T-cell (primary cell): ENCODE measurements at regions of chr13 and their contacts with region 1.

Region 1: GRCh38 chr13:29771247-29771646 is 79.2 kb downstream of the UBL3 start:
- DNase-seq: peak in 2 of 35 experiments; percentile 10 to 70
- ATAC-seq: peak; percentile 41 to 75 (median 46)
- H3K4me3 ChIP-seq: no peak overlapping the region
- H3K4me3 Mint-ChIP-seq: no peak overlapping the region
- H3K27ac ChIP-seq: no peak overlapping the region
- H3K27ac Mint-ChIP-seq: no peak overlapping the region
- H3K4me1 ChIP-seq: no peaks in the 10 kb centered on the region
- H3K4me1 Mint-ChIP-seq: peaks cover 5 to 7% (median 6%) of the 10 kb centered on the region in 3 donors
- H3K27me3 ChIP-seq: no peaks in the 10 kb centered on the region
- H3K27me3 Mint-ChIP-seq: no peaks in the 10 kb centered on the region

Region 2: DNA sequence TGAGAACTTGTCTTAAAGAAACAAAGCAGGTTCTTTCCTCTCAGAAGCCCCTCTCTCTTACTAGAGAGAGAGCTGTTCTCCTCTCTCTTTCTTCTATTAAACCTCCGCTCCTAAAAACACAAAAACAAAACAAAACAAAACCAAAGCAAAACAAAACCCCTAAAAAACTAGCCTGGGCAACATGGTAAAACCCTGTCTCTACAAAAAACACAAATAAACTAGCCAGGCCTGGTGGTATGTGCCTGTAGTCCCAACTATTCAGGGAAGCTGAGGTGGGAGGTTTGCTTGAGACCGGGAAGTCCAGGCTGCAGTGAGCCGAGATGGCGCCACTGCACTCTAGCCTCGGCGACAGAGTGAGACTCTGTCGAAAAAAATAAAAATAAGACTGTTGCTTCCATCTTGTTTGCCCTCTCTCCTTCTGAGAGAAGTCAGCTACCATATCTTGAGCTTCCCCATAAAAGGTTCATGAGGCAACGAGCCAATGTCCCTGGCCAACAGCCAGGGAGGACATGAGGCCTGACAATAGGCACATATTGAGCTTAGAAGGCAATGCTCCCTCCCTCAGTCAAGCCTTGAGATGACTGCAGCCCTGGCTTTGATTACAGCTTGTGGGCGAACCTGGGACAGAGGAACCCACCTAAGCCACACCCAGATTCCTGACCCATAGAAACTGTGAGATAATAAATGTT is 1653.4 kb before region 1 on chr13:
- CTCF ChIA-PET with region 1: no interaction called
- POLR2A ChIA-PET with region 1: no interaction called
- DNase-seq: no peak
- ATAC-seq: no peak
- H3K4me3 ChIP-seq: no peak overlapping the region
- H3K4me3 Mint-ChIP-seq: no peak overlapping the region
- H3K27ac ChIP-seq: no peak overlapping the region
- H3K27ac Mint-ChIP-seq: no peak overlapping the region
- H3K4me1 ChIP-seq: no peaks in the 10 kb centered on the region
- H3K4me1 Mint-ChIP-seq: peaks cover 0 to 7% (median 5%) of the 10 kb centered on the region in 3 donors
- H3K27me3 ChIP-seq: peaks cover 0 to 9% of the 10 kb centered on the region in 2 experiments
- H3K27me3 Mint-ChIP-seq: peaks cover 4 to 11% of the 10 kb centered on the region in 2 donors

Region 3: GRCh38 chr13:29758531-29759114 is 12.6 kb before region 1 on chr13:
- CTCF ChIA-PET with region 1: interaction called, 3 to 15 read pairs
- POLR2A ChIA-PET with region 1: interaction called in 1 of 2 experiments, 3 read pairs
- DNase-seq: peak in 34 of 35 experiments; percentile 1 to 65 (median 35)
- ATAC-seq: peak; percentile 49 to 81 (median 60)
- H3K4me3 ChIP-seq: no peak overlapping the region
- H3K4me3 Mint-ChIP-seq: peak overlapping the region in 1 of 3 donors; percentile 24
- H3K27ac ChIP-seq: no peak overlapping the region
- H3K27ac Mint-ChIP-seq: peak overlapping the region in 1 of 2 donors; percentile 56
- H3K4me1 ChIP-seq: peaks cover 5 to 9% of the 10 kb centered on the region in 2 experiments
- H3K4me1 Mint-ChIP-seq: peaks cover 22 to 27% (median 22%) of the 10 kb centered on the region in 3 donors
- H3K27me3 ChIP-seq: no peaks in the 10 kb centered on the region
- H3K27me3 Mint-ChIP-seq: no peaks in the 10 kb centered on the region

Region 4: DNA sequence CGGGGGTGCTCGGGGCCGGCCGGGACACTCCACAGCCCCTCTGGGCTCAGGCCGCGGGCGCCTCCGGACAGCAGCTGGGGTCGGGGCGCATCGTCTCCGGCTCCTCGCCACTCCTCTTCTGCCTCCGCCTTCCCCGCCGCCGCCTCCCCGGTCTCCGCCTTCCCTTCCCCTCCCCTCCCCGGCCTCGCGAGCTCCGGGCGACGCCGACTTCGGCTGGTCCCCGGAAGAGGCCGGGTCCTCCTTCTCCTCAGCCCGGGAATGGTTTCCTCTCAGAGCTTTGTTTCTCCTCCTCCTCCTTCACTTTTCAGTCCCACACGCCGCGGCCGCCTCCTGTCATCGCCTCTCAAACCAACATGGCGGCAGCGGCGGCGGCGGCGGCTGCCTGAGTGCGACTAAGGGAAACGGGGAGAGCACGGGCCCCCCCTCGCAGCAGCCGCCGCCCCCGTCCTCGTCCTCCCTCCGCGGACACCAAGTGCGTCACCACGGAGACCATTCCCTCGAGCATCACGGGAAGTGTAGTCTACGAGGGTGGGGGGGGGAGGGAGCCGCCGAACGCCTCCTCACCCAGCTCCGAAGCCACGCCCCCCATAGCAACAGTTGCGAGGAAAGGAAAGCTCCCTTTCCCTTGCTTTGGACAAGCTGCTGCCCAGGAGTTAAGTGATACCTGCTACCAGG is 79.1 kb after region 1 on chr13 and contains the start of gene UBL3:
- CTCF ChIA-PET with region 1: interaction called, 5 to 22 read pairs
- POLR2A ChIA-PET with region 1: interaction called, 4 read pairs
- DNase-seq: peak; percentile 86 to 97 (median 94)
- ATAC-seq: peak; percentile 92 to 94 (median 92)
- H3K4me3 ChIP-seq: peak within 1 kb of the TSS; percentile 96 to 99
- H3K4me3 Mint-ChIP-seq: peak within 1 kb of the TSS; percentile 93 to 98 (median 97)
- H3K27ac ChIP-seq: peak within 1 kb of the TSS; percentile 94
- H3K27ac Mint-ChIP-seq: peak within 1 kb of the TSS; percentile 98 to 99
- H3K4me1 ChIP-seq: peaks cover 0 to 17% of the 10 kb centered on the region in 2 experiments
- H3K4me1 Mint-ChIP-seq: peaks cover 31 to 33% (median 31%) of the 10 kb centered on the region in 3 donors
- H3K27me3 ChIP-seq: no peaks in the 10 kb centered on the region
- H3K27me3 Mint-ChIP-seq: no peaks in the 10 kb centered on the region
- total RNA-seq, gene UBL3: 32.7 to 42.1 (median 34.6) TPM

Region 5: DNA sequence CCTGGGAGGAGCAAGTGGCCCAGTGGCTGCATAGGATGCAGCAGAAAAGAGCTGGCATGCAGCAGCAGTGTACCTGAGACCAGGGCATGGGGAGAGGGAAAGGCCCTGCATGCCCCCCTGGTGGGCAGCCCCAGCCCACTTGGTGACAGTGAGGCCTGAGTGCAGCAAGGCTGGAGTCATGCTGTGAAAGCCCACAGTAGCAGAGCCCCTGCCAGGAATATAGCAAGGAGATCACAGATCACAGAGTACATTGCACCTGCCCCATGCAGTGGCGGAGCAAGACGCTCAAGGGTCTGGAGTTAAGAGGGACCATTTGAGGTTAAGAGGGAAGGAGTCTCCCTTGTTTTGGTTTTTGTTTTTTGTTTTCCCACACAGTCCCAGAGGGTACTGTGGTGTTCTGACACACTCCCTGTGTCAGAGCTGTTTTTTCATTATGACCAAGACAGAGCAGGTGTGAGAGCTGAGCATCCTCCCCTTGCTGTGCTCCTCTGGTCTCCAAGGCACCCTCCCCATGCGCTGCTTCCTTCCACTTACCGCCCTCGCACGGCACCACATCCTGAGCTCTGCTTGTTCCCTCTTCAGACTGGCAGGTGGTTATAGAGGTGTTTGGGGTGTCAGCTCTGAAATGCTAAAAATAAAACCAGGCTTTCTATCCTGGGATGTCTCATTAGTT is 164.2 kb after region 1 on chr13:
- CTCF ChIA-PET with region 1: interaction called in 1 of 2 experiments, 18 read pairs
- POLR2A ChIA-PET with region 1: no interaction called
- DNase-seq: peak; percentile 59 to 87 (median 76)
- ATAC-seq: peak; percentile 93 to 95 (median 93)
- H3K4me3 ChIP-seq: peak overlapping the region; percentile 44 to 61
- H3K4me3 Mint-ChIP-seq: peak overlapping the region; percentile 87 to 90 (median 87)
- H3K27ac ChIP-seq: peak overlapping the region; percentile 53
- H3K27ac Mint-ChIP-seq: peak overlapping the region; percentile 92 to 93
- H3K4me1 ChIP-seq: peaks cover 31 to 52% of the 10 kb centered on the region in 2 experiments
- H3K4me1 Mint-ChIP-seq: peaks cover 46 to 59% (median 57%) of the 10 kb centered on the region in 3 donors
- H3K27me3 ChIP-seq: no peaks in the 10 kb centered on the region
- H3K27me3 Mint-ChIP-seq: no peaks in the 10 kb centered on the region

Region 6: DNA sequence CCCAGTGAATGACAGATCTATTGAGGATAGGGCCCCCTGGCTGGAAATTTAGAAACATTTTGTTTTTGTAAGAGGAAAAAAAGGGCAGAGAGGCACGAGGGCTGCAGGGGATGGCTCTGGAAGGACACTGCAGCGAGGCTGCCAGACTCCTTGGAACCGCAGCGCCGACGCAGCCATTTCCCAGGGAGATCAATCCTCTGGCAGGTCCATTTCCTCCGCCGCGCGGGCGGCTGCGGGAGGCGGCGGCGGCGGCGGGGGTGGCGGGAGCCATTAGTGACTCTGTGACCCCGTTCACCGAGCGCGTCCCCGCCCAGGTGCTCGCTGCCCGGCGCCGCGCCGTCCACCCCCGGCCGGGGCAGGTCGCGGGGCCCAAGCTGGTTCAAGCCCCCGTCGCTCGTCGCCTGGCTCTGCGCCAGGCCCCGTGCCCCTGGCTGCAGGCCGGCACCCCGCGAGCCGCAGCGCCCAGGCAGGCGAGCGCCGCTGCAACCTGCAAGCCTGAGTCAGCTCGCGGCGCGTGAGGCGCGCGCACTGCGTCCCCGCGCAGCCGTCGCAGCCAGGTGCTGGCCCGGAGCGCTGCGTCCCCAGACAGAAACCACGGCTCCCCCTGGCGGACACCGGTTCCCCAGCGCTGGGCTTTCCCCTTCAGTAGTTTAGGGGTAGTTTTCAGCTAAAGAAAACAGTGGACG is 343.5 kb after region 1 on chr13:
- CTCF ChIA-PET with region 1: interaction called, 44 to 352 read pairs
- POLR2A ChIA-PET with region 1: interaction called in 1 of 2 experiments, 6 read pairs
- DNase-seq: peak; percentile 78 to 96 (median 91)
- ATAC-seq: peak; percentile 89 to 95 (median 94)
- H3K4me3 ChIP-seq: peak overlapping the region; percentile 38 to 47
- H3K4me3 Mint-ChIP-seq: peak overlapping the region; percentile 79 to 80 (median 79)
- H3K27ac ChIP-seq: peak overlapping the region; percentile 37
- H3K27ac Mint-ChIP-seq: peak overlapping the region; percentile 49 to 82
- H3K4me1 ChIP-seq: peaks cover 10 to 26% of the 10 kb centered on the region in 2 experiments
- H3K4me1 Mint-ChIP-seq: peaks cover 30 to 38% (median 38%) of the 10 kb centered on the region in 3 donors
- H3K27me3 ChIP-seq: peaks cover 0 to 2% of the 10 kb centered on the region in 2 experiments
- H3K27me3 Mint-ChIP-seq: no peaks in the 10 kb centered on the region

Region 7: DNA sequence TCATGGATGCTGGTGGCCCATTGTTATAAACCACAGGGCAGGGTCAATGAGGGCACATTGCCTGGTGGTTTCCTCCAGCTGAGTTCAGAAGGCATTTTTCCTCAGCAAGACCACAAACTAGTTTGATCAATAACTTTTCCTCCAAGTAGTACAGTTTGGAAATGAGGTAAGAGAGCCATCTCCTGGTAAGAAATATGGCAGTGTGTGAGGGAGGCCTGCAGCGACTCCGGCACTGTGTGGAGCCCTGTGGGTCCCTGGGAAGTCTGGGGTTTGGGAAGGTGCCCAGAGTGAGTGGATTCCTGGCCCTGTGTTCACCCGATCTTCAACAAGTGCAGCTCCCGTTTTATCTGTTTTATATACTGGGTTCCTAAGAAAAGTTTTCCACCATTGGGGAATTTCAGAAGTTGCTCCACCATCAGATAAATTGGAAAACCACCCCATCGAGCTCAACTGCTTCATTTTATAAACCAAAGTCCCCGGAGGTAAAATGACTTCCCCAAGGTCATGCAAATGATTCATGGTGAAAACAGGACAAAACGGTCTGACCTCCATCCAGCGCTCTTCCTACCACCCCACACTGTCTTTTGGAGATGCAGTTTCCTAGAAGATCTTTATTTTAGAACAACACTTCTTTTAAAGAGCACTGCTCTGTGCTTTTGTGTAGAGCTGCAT is 387.7 kb after region 1 on chr13:
- CTCF ChIA-PET with region 1: interaction called, 3 to 15 read pairs
- POLR2A ChIA-PET with region 1: no interaction called
- DNase-seq: peak in 3 of 35 experiments; percentile 4 to 71 (median 20)
- ATAC-seq: peak in 3 of 4 experiments; percentile 70 to 82 (median 72)
- H3K4me3 ChIP-seq: no peak overlapping the region
- H3K4me3 Mint-ChIP-seq: no peak overlapping the region
- H3K27ac ChIP-seq: no peak overlapping the region
- H3K27ac Mint-ChIP-seq: peak overlapping the region; percentile 75 to 78
- H3K4me1 ChIP-seq: peaks cover 2 to 54% of the 10 kb centered on the region in 2 experiments
- H3K4me1 Mint-ChIP-seq: peaks cover 38 to 56% (median 54%) of the 10 kb centered on the region in 3 donors
- H3K27me3 ChIP-seq: no peaks in the 10 kb centered on the region
- H3K27me3 Mint-ChIP-seq: no peaks in the 10 kb centered on the region